Heart right ventricle (tissue), 16 donors: ENCODE measurements at regions of chr12 and their contacts with region 1.

Region 1: GRCh38 chr12:76083904-76084862 is at the start of gene NAP1L1:
- DNase-seq: peak; percentile 98
- ATAC-seq: peak; percentile 96 to 98 (median 96)
- H3K4me3 ChIP-seq: peak within 1 kb of the TSS; percentile 74 to 97 (median 88)
- H3K27ac ChIP-seq: peak within 1 kb of the TSS; percentile 95 to 100 (median 98)
- H3K4me1 ChIP-seq: peaks cover 0 to 50% (median 31%) of the 10 kb centered on the region in 9 donors
- H3K27me3 ChIP-seq: no peaks in the 10 kb centered on the region
- CTCF ChIP-seq: no peak
- total RNA-seq, gene NAP1L1: 224 to 363 (median 264) TPM

Region 2: GRCh38 chr12:76158518-76159321 is 74.5 kb after region 1 on chr12:
- intact Hi-C with region 1: loop called in 1 of 10 experiments (anchors 10 kb)
- DNase-seq: peak in 1 of 2 donors; percentile 33
- ATAC-seq: peak in 7 of 8 donors; percentile 71 to 95 (median 81)
- H3K4me3 ChIP-seq: peak overlapping the region in 2 of 10 donors; percentile 20 to 35
- H3K27ac ChIP-seq: peak overlapping the region in 1 of 10 donors; percentile 78
- H3K4me1 ChIP-seq: peaks cover 0 to 37% (median 0%) of the 10 kb centered on the region in 9 donors
- H3K27me3 ChIP-seq: no peaks in the 10 kb centered on the region
- CTCF ChIP-seq: peak in 8 of 9 donors; percentile 33 to 77 (median 48)

Region 3: GRCh38 chr12:76266797-76267196 is 182.6 kb after region 1 on chr12:
- intact Hi-C with region 1: loop called in 1 of 10 experiments (anchors 10 kb)
- DNase-seq: peak in 1 of 2 donors; percentile 36
- ATAC-seq: peak in 7 of 8 donors; percentile 73 to 99 (median 90)
- H3K4me3 ChIP-seq: no peak overlapping the region
- H3K27ac ChIP-seq: peak overlapping the region in 1 of 10 donors; percentile 38
- H3K4me1 ChIP-seq: peaks cover 0 to 13% (median 5%) of the 10 kb centered on the region in 9 donors
- H3K27me3 ChIP-seq: peaks cover 0 to 4% (median 0%) of the 10 kb centered on the region in 7 donors
- CTCF ChIP-seq: no peak

Region 4: GRCh38 chr12:76341436-76342030 is 257.4 kb after region 1 on chr12:
- intact Hi-C with region 1: loop called in 7 of 10 experiments (anchors 2 to 10 kb)
- DNase-seq: no peak
- ATAC-seq: no peak
- H3K4me3 ChIP-seq: no peak overlapping the region
- H3K27ac ChIP-seq: no peak overlapping the region
- H3K4me1 ChIP-seq: peaks cover 0 to 35% (median 18%) of the 10 kb centered on the region in 9 donors
- H3K27me3 ChIP-seq: no peaks in the 10 kb centered on the region
- CTCF ChIP-seq: no peak

Region 5: GRCh38 chr12:76559400-76560085 is 475.4 kb after region 1 on chr12 and contains the start of gene OSBPL8:
- intact Hi-C with region 1: loop called in 2 of 10 experiments (anchors 10 kb)
- DNase-seq: peak; percentile 96 to 97
- ATAC-seq: peak; percentile 97 to 99 (median 98)
- H3K4me3 ChIP-seq: peak within 1 kb of the TSS; percentile 84 to 97 (median 94)
- H3K27ac ChIP-seq: peak within 1 kb of the TSS; percentile 67 to 99 (median 94)
- H3K4me1 ChIP-seq: peaks cover 0 to 49% (median 32%) of the 10 kb centered on the region in 9 donors
- H3K27me3 ChIP-seq: no peaks in the 10 kb centered on the region
- CTCF ChIP-seq: peak in 5 of 9 donors; percentile 32 to 68 (median 62)
- total RNA-seq, gene OSBPL8: 25.5 to 50.0 (median 37.0) TPM